Activated CD4-positive, alpha-beta memory T cell treated with anti-CD3 and anti-CD28 coated beads for 36 hours (primary cell): ENCODE measurements at regions of chr17 and their contacts with region 1.

Region 1: DNA sequence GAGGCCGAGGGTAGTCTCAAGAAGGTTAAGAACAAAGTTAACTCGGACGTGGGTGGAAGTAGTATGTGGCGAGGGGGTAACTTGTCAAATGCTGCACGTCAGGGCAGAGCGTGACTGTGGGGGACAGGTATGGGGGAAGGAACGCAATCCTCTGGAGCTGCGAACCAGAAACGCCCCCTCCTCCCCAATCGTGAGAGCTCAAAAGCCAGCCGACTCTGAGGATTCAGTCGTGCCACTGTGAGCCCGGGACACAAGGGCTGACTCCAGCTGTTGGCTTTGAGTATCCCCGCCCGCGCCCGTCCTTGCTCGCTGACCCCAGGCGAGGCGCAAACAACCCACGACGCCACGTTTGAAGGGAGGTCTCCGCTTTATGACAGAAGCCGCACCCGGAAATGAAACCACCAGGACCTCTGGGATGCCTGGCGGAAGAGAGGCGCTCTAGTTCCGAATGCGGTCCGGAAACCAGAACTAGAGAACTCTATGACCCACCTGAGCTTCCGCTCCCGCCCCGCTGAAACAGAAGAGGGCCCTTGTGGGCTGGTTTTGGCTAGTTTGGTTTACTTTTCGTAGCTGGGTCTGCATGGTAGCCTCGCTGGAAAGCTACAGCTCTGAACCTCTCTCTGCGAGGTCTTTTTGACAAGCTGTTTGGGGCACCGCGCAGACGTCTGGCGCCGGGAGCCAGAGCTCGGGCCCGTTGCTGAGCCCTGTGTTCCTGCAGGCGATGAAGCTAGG is at the start of gene PEX12:
- DNase-seq: peak; percentile 92
- H3K4me3 Mint-ChIP-seq: peak within 1 kb of the TSS; percentile 94
- H3K27ac Mint-ChIP-seq: peak within 1 kb of the TSS; percentile 98
- H3K4me1 Mint-ChIP-seq: peaks cover 20% of the 10 kb centered on the region
- H3K27me3 Mint-ChIP-seq: no peaks in the 10 kb centered on the region
- total RNA-seq, gene PEX12: 4.9 to 6.0 TPM

Region 2: DNA sequence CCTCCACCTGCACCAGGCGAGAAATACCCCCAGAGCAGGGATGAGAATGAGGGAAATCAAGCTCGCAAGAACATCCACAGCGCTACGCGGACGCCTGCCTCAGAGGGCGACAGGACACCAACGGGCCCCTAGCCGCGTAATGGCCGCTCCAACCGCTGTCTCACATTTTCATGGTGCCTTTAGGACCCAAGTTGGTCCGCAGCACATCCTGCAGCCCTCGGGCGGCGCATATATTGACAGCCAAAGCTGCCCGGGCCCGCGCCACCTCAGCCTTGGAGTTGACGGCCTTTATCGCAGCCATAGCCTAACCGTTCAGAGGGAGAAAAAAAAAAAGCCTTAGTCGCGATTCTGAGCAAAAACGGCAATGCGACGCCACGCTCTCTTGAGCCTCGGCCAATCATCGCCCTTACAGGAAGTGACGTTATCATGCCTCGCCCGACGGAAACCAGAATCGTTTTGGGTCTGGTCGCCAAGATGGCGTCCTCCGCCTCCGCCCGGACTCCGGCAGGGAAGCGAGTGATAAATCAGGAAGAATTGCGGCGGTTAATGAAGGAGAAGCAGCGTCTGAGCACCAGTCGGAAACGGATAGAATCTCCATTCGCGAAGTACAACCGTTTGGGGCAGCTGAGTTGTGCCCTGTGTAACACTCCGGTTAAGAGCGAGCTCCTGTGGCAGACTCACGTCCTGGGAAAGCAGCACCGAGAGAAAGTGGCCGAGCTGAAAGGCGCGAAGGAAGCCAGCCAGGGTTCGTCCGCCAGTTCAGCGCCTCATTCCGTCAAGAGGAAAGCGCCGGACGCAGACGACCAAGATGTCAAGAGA is 617.1 kb before region 1 on chr17 and contains the starts of genes CCT6B and ZNF830:
- CTCF ChIA-PET with region 1: no interaction called
- POLR2A ChIA-PET with region 1: no interaction called
- intact Hi-C with region 1: loop called (anchors 5 kb)
- DNase-seq: peak; percentile 96
- H3K4me3 Mint-ChIP-seq: peak within 1 kb of the TSS; percentile 100
- H3K27ac Mint-ChIP-seq: peak within 1 kb of the TSS; percentile 97
- H3K4me1 Mint-ChIP-seq: peaks cover 24% of the 10 kb centered on the region
- H3K27me3 Mint-ChIP-seq: no peaks in the 10 kb centered on the region
- total RNA-seq, gene CCT6B: 1.1 to 1.3 TPM
- total RNA-seq, gene ZNF830: 19.5 to 20.7 TPM